Activated T-helper 2 cell treated with anti-CD3 and anti-CD28 coated beads, Interferon-gamma antibody, Interleukin-2, Interleukin-4, amounts not matched to agents 10 μg/mL and 5 μg/mL and 100 μg/mL, durations not matched to agents 14 hours and 24 hours and 36 hours (primary cell): ENCODE measurements at regions of chr18 and their contacts with region 1.

Region 1: GRCh38 chr18:23283916-23284430 is 148.7 kb downstream of the CABLES1 start:
- DNase-seq: no peak
- H3K4me3 Mint-ChIP-seq: no peak overlapping the region
- H3K27ac Mint-ChIP-seq: peak overlapping the region; percentile 76
- H3K4me1 Mint-ChIP-seq: peaks cover 28% of the 10 kb centered on the region
- H3K27me3 Mint-ChIP-seq: no peaks in the 10 kb centered on the region

Region 2: DNA sequence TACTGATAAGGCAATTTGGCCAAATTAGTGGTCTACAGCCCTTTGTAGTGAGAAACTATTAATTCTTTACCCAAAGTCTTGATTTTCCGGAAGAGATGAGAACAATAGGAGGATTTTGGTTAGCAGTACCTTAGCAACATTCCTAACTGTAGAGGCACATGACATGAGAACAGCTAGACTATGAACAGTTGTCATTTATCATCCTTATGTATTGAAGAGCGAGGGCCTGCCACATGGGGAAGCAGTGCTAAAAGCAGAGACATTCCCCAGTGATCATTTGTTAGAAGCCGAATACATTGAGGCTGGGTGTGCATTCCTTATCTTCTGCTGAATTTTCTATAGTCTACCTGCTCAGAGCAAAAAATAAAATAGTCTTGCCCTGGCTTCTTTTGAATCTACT is 285.6 kb before region 1 on chr18:
- intact Hi-C with region 1: no loop called
- DNase-seq: no peak
- H3K4me3 Mint-ChIP-seq: no peak overlapping the region
- H3K27ac Mint-ChIP-seq: peak overlapping the region; percentile 5
- H3K4me1 Mint-ChIP-seq: peaks cover 10% of the 10 kb centered on the region
- H3K27me3 Mint-ChIP-seq: no peaks in the 10 kb centered on the region

Region 3: GRCh38 chr18:23115683-23116096 is 168.3 kb before region 1 on chr18:
- intact Hi-C with region 1: no loop called
- DNase-seq: no peak
- H3K4me3 Mint-ChIP-seq: no peak overlapping the region
- H3K27ac Mint-ChIP-seq: no peak overlapping the region
- H3K4me1 Mint-ChIP-seq: peaks cover 11% of the 10 kb centered on the region
- H3K27me3 Mint-ChIP-seq: peaks cover 13% of the 10 kb centered on the region

Region 4: GRCh38 chr18:23209031-23209430 is 74.9 kb before region 1 on chr18:
- intact Hi-C with region 1: loop called (anchors 1 kb)
- DNase-seq: no peak
- H3K4me3 Mint-ChIP-seq: no peak overlapping the region
- H3K27ac Mint-ChIP-seq: peak overlapping the region; percentile 97
- H3K4me1 Mint-ChIP-seq: peaks cover 45% of the 10 kb centered on the region
- H3K27me3 Mint-ChIP-seq: no peaks in the 10 kb centered on the region

Region 5: GRCh38 chr18:23259701-23260582 is 24.0 kb before region 1 on chr18:
- intact Hi-C with region 1: loop called (anchors 2 kb)
- DNase-seq: no peak
- H3K4me3 Mint-ChIP-seq: peak overlapping the region; percentile 27
- H3K27ac Mint-ChIP-seq: peak overlapping the region; percentile 58
- H3K4me1 Mint-ChIP-seq: peaks cover 40% of the 10 kb centered on the region
- H3K27me3 Mint-ChIP-seq: no peaks in the 10 kb centered on the region

Region 6: GRCh38 chr18:23307567-23308295 is 23.8 kb after region 1 on chr18:
- intact Hi-C with region 1: loop called (anchors 2 kb)
- DNase-seq: peak; percentile 36
- H3K4me3 Mint-ChIP-seq: no peak overlapping the region
- H3K27ac Mint-ChIP-seq: peak overlapping the region; percentile 78
- H3K4me1 Mint-ChIP-seq: peaks cover 43% of the 10 kb centered on the region
- H3K27me3 Mint-ChIP-seq: no peaks in the 10 kb centered on the region

Region 7: GRCh38 chr18:23356915-23357601 is 73.1 kb after region 1 on chr18:
- intact Hi-C with region 1: loop called (anchors 1 kb)
- DNase-seq: no peak
- H3K4me3 Mint-ChIP-seq: no peak overlapping the region
- H3K27ac Mint-ChIP-seq: no peak overlapping the region
- H3K4me1 Mint-ChIP-seq: peaks cover 39% of the 10 kb centered on the region
- H3K27me3 Mint-ChIP-seq: no peaks in the 10 kb centered on the region